WTC11 (cell line): ENCODE measurements at regions of chrX and their contacts with region 1.

Region 1: GRCh38 chrX:72540318-72540717 is 32.3 kb downstream of the HDAC8 start:
- DNase-seq: no peak
- ATAC-seq: no peak
- H3K4me3 Mint-ChIP-seq: no peak overlapping the region
- H3K27ac Mint-ChIP-seq: no peak overlapping the region
- H3K4me1 Mint-ChIP-seq: no peaks in the 10 kb centered on the region
- H3K27me3 Mint-ChIP-seq: no peaks in the 10 kb centered on the region
- CTCF ChIP-seq: no peak

Region 2: GRCh38 chrX:72245461-72246089 is 294.7 kb before region 1 on chrX:
- CTCF ChIA-PET with region 1: interaction called, 12 read pairs
- POLR2A ChIA-PET with region 1: no interaction called
- DNase-seq: peak; percentile 73
- ATAC-seq: peak; percentile 89
- H3K4me3 Mint-ChIP-seq: no peak overlapping the region
- H3K27ac Mint-ChIP-seq: no peak overlapping the region
- H3K4me1 Mint-ChIP-seq: no peaks in the 10 kb centered on the region
- H3K27me3 Mint-ChIP-seq: no peaks in the 10 kb centered on the region; the same call in 1 of the 2 replicates
- CTCF ChIP-seq: peak; percentile 52; the same call in 1 of the 2 replicates

Region 3: GRCh38 chrX:72306851-72307645 is 233.3 kb before region 1 on chrX:
- CTCF ChIA-PET with region 1: interaction called, 11 read pairs
- POLR2A ChIA-PET with region 1: no interaction called
- DNase-seq: peak; percentile 51
- ATAC-seq: peak; percentile 34
- H3K4me3 Mint-ChIP-seq: peak overlapping the region; percentile 76
- H3K27ac Mint-ChIP-seq: no peak overlapping the region
- H3K4me1 Mint-ChIP-seq: peaks cover 16% of the 10 kb centered on the region
- H3K27me3 Mint-ChIP-seq: peaks cover 74% of the 10 kb centered on the region
- CTCF ChIP-seq: no peak